Breast epithelium (tissue), 4 donors: ENCODE measurements at regions of chr1 and their contacts with region 1.

Region 1: GRCh38 chr1:227489572-227489971 is 73.8 kb upstream of the ZNF678 start:
- DNase-seq: no peak
- H3K4me3 ChIP-seq: no peak overlapping the region
- H3K27ac ChIP-seq: no peak overlapping the region
- H3K4me1 ChIP-seq: no peaks in the 10 kb centered on the region
- H3K27me3 ChIP-seq: no peaks in the 10 kb centered on the region
- CTCF ChIP-seq: no peak
- POLR2A ChIP-seq: no peak

Region 2: GRCh38 chr1:225746361-225747179 is 1743.0 kb before region 1 on chr1:
- intact Hi-C with region 1: no loop called
- DNase-seq: peak; percentile 56 to 67
- H3K4me3 ChIP-seq: peak overlapping the region; percentile 43 to 65 (median 48)
- H3K27ac ChIP-seq: peak overlapping the region; percentile 94
- H3K4me1 ChIP-seq: peaks cover 0 to 5% of the 10 kb centered on the region in 2 donors
- H3K27me3 ChIP-seq: no peaks in the 10 kb centered on the region
- CTCF ChIP-seq: peak in 2 of 3 donors; percentile 34 to 42
- POLR2A ChIP-seq: no peak

Region 3: GRCh38 chr1:227219715-227220292 is 269.8 kb before region 1 on chr1:
- intact Hi-C with region 1: loop called (anchors 10 kb)
- DNase-seq: no peak
- H3K4me3 ChIP-seq: no peak overlapping the region
- H3K27ac ChIP-seq: no peak overlapping the region
- H3K4me1 ChIP-seq: no peaks in the 10 kb centered on the region
- H3K27me3 ChIP-seq: no peaks in the 10 kb centered on the region
- CTCF ChIP-seq: no peak
- POLR2A ChIP-seq: no peak

Region 4: DNA sequence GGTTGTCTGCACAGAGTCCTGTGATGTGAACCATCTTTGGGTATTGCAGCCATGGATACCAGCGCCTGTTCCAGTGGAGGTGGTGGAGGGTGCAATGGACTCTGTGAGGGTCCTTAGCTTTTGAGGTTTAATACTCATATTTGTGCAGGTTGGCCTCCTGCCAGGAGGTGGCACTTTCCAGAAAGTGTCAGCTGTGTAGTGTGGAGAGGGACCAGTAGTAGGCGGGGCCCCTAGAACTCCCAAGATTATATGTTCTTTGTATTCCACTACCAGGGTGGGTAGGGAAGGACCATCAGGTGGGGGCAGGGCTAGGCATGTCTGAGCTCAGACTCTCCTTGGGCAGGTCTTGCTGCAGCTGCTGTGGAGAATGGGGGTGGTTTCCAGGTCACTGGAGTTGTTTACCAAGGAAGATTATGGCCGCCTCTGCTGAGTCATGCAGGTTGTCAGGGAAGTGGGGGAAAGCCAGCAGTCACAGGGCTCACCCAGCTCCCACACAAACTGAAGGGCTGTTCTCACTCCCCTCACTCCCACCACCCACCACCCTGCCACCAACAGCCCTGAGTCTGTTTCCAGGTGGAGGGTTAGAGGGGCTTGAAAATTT is 42.5 kb after region 1 on chr1:
- intact Hi-C with region 1: no loop called
- DNase-seq: no peak
- H3K4me3 ChIP-seq: no peak overlapping the region
- H3K27ac ChIP-seq: no peak overlapping the region
- H3K4me1 ChIP-seq: no peaks in the 10 kb centered on the region
- H3K27me3 ChIP-seq: no peaks in the 10 kb centered on the region
- CTCF ChIP-seq: no peak
- POLR2A ChIP-seq: no peak